A549 (cell line): ENCODE measurements at regions of chr7 and their contacts with region 1.

Region 1: DNA sequence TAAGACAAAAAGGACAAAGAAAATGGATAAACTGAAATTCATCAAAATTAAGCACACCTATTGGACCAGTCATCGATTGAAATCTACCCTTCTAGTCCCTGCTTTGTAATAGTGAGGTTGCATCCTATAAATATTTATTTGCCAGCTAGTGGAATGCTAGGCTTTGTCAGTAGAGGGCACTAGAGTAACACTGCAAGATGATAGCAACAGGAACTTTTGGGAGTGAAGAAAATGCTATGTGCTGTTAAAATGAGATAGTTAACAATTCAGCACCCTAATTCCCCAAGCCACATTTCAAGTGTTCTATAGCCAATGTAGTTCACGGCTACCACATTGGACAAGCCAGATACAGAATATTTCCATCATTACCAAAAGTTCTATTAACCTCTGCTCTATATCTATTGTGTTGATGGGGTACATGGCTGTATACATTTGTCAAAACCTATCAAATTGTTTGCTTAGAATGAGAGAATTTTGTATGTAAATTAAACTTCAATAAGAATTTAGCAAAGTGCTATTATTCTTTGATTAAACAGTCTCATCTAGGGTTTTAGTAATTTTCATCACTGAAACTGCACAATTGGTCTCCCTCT is 69.8 kb downstream of the LSMEM1 start:
- DNase-seq: peak; percentile 34 to 73
- ATAC-seq: peak; percentile 85 to 91; a peak in 5 of 6 replicates
- H3K4me3 ChIP-seq: no peak overlapping the region
- H3K27ac ChIP-seq: no peak overlapping the region
- H3K4me1 ChIP-seq: no peaks in the 10 kb centered on the region
- CTCF ChIP-seq: peak; percentile 93
- EP300 ChIP-seq: no peak
- POLR2A ChIP-seq: no peak
- RAD21 ChIP-seq: peak; percentile 86 to 95

Region 2: DNA sequence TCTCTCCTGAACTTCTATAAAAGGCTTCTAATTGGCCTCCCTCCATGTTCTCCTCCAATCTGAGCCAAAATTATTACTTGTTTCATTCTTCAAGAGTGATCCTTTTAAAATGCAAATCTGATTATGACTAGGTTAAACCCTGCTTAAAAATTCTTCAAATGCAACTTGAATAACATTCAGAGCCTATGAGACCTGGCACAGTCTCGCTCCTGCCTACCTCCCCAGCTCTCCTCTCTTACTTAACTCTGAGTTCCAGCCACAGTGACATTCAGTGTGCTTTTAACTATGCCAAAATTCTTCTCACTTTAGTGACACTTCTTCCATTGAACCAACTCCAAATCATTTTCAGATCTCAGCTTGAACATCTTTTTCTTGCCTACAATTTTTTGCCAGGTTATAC is 170.8 kb after region 1 on chr7:
- CTCF ChIA-PET with region 1: no interaction called
- POLR2A ChIA-PET with region 1: no interaction called
- DNase-seq: no peak
- ATAC-seq: no peak
- H3K4me3 ChIP-seq: no peak overlapping the region
- H3K27ac ChIP-seq: no peak overlapping the region
- H3K4me1 ChIP-seq: no peaks in the 10 kb centered on the region
- CTCF ChIP-seq: no peak
- EP300 ChIP-seq: no peak
- POLR2A ChIP-seq: no peak
- RAD21 ChIP-seq: no peak

Region 3: GRCh38 chr7:112898432-112899290 is 348.1 kb after region 1 on chr7:
- CTCF ChIA-PET with region 1: interaction called, 24 read pairs
- POLR2A ChIA-PET with region 1: no interaction called
- DNase-seq: peak; percentile 28 to 70
- ATAC-seq: peak; percentile 95 to 98; a peak in 5 of 6 replicates
- H3K4me3 ChIP-seq: no peak overlapping the region
- H3K27ac ChIP-seq: no peak overlapping the region
- H3K4me1 ChIP-seq: 0 out of 3 replicates have a peak, but pooled peaks cover 2% of the 10 kb centered on the region
- CTCF ChIP-seq: peak; percentile 88
- EP300 ChIP-seq: no peak
- POLR2A ChIP-seq: no peak
- RAD21 ChIP-seq: peak; percentile 83 to 92

Region 4: DNA sequence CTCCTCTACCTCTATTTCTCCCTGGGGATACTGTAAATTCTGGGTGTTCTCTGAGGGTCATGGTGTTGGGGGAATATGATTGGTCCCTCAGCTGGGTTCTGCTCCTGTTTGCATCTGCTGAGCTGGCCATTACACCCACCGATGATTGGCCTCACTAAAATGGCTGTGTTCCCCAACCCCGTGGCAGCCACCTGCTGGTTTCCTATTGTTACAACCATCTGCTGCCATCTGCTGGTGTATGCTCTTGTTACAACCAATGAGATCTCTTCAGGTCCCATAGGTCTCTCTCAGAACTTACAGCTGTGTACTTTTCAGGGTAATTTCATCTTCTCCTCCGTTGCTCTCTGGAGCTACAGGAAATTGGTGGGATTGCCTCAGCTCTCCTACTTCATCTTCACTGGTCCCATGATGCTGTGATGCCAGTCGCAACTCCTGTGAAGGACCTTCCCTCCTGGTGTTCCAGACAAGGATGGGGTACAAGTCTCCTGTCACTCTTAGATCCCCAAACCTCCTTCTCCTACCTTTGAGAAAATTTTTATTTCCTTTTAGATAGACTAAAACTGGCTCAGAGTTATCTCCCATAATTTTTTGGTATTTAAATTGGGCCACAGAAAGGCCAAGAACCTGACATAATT is 871.2 kb after region 1 on chr7:
- CTCF ChIA-PET with region 1: interaction called, 10 read pairs
- POLR2A ChIA-PET with region 1: no interaction called
- DNase-seq: peak; percentile 50 to 84
- ATAC-seq: peak; percentile 97 to 100
- H3K4me3 ChIP-seq: no peak overlapping the region
- H3K27ac ChIP-seq: no peak overlapping the region
- H3K4me1 ChIP-seq: no peaks in the 10 kb centered on the region
- CTCF ChIP-seq: peak; percentile 79
- EP300 ChIP-seq: no peak
- POLR2A ChIP-seq: no peak
- RAD21 ChIP-seq: peak; percentile 76 to 77